ENCODE measurements at regions of chr18 and their contacts with region 1.

Region 1: GRCh38 chr18:2906704-2907549 is 60.1 kb downstream of the EMILIN2 start:
- DNase-seq: peak; percentile 63
- H3K4me3 ChIP-seq: peak overlapping the region; percentile 79
- H3K27ac ChIP-seq: peak overlapping the region; percentile 83
- H3K4me1 ChIP-seq: no peaks in the 10 kb centered on the region
- H3K27me3 ChIP-seq: no peaks in the 10 kb centered on the region
- CTCF ChIP-seq: peak; percentile 38

Region 2: DNA sequence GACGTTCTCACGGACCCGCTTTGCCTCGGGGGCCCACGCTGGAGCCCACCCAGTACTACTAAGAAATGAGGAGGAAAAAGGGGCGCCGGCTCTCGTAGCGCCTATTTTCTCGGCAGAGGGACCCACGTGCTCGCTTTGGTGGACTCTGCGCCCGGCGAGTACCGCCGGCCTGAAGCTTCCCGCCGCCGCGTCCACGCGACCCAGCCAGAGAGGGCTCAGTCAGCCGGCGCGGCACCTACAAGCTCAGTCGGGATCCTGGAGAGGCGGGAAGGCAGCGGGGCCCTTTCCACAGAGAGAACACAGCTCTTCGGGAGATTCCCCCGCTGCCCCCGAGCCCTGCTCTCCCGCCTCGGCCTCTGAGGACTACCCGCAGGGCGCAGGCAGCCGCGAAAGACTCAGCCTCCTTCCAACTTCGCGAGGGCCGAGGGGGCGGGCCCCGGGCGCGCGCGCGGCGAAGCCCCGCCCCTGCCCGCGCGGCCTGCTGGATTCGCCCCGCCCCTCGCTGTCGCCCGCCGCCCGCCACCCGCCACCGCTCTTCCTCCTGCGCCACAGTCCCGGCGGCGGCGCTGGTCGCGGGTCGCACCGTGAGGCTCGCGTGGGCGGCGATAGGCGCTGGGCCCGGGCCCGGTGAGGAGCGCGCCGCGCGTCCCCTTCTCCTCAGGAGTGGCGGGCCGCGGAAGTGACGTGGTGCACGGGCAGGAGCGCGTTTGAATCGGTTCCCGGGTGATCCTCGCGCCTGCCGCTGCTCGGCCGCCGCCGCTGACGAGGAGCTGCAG is 251.6 kb before region 1 on chr18 and contains the start of gene SMCHD1:
- CTCF ChIA-PET with region 1: no interaction called
- POLR2A ChIA-PET with region 1: no interaction called
- intact Hi-C with region 1: loop called (anchors 10 kb)
- DNase-seq: peak; percentile 92
- H3K4me3 ChIP-seq: peak within 1 kb of the TSS; percentile 98
- H3K27ac ChIP-seq: peak within 1 kb of the TSS; percentile 97
- H3K4me1 ChIP-seq: peaks cover 5% of the 10 kb centered on the region
- H3K27me3 ChIP-seq: no peaks in the 10 kb centered on the region
- CTCF ChIP-seq: no peak
- total RNA-seq, gene SMCHD1: 74.0 and 80.9 TPM in 2 replicates